ENCODE measurements at regions of chr6 and their contacts with region 1.

Region 1: GRCh38 chr6:34036357-34037069 is 109.4 kb downstream of the GRM4 start:
- DNase-seq: no peak
- H3K4me3 ChIP-seq: no peak overlapping the region
- H3K27ac ChIP-seq: no peak overlapping the region
- H3K4me1 ChIP-seq: no peaks in the 10 kb centered on the region
- H3K27me3 ChIP-seq: no peaks in the 10 kb centered on the region
- CTCF ChIP-seq: no peak

Region 2: DNA sequence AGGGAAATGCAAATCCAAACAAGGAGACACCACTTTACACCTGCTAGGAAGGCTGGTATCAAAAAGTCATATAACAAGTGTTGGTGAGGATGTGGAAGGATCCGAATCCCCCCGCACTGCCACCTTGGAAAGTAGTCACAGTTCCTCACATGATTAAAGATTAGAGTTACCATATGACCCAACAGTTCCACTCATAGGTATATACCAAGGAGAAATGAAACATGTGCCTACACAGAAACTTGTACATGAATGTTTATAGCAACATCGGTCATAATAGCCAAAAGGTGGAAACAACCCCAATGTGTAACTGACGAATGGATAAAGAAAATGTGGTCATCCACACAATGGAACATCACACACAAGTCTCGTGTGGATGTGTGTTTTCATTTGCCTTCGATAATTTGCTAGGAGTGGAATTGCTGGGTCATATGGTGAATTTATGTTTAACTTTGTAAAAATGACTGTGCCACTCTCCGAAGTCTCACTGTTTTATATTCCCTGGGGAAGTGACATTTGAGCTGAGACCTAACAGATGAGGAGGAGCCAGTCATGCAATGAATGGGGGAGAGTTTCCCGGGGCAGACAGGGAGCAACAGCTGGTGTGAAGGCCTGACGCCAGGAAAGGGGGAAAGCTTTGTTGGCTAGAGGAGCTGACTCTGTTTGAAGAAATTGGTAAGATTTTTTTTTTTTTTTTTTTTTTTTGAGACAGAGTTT is 106.8 kb before region 1 on chr6:
- CTCF ChIA-PET with region 1: no interaction called
- dilution Hi-C with region 1: loop called (anchors 5 kb)
- in situ Hi-C with region 1: no loop called
- intact Hi-C with region 1: no loop called
- DNase-seq: no peak
- H3K4me3 ChIP-seq: no peak overlapping the region
- H3K27ac ChIP-seq: no peak overlapping the region
- H3K4me1 ChIP-seq: no peaks in the 10 kb centered on the region
- H3K27me3 ChIP-seq: no peaks in the 10 kb centered on the region
- CTCF ChIP-seq: no peak

Region 3: GRCh38 chr6:34005901-34006531 is 30.5 kb before region 1 on chr6:
- CTCF ChIA-PET with region 1: no interaction called
- dilution Hi-C with region 1: no loop called
- in situ Hi-C with region 1: no loop called
- intact Hi-C with region 1: no loop called
- DNase-seq: no peak
- H3K4me3 ChIP-seq: no peak overlapping the region
- H3K27ac ChIP-seq: no peak overlapping the region
- H3K4me1 ChIP-seq: no peaks in the 10 kb centered on the region
- H3K27me3 ChIP-seq: no peaks in the 10 kb centered on the region
- CTCF ChIP-seq: no peak

Region 4: GRCh38 chr6:34143884-34144580 is 107.5 kb after region 1 on chr6:
- CTCF ChIA-PET with region 1: no interaction called
- dilution Hi-C with region 1: loop called (anchors 5 kb)
- in situ Hi-C with region 1: no loop called
- intact Hi-C with region 1: no loop called
- DNase-seq: no peak
- H3K4me3 ChIP-seq: peak overlapping the region in 1 of 3 experiments; percentile 9
- H3K27ac ChIP-seq: no peak overlapping the region
- H3K4me1 ChIP-seq: peaks cover 23% of the 10 kb centered on the region
- H3K27me3 ChIP-seq: peaks cover 28% of the 10 kb centered on the region
- CTCF ChIP-seq: no peak